A673 (cell line): ENCODE measurements at regions of chr3 and their contacts with region 1.

Region 1: DNA sequence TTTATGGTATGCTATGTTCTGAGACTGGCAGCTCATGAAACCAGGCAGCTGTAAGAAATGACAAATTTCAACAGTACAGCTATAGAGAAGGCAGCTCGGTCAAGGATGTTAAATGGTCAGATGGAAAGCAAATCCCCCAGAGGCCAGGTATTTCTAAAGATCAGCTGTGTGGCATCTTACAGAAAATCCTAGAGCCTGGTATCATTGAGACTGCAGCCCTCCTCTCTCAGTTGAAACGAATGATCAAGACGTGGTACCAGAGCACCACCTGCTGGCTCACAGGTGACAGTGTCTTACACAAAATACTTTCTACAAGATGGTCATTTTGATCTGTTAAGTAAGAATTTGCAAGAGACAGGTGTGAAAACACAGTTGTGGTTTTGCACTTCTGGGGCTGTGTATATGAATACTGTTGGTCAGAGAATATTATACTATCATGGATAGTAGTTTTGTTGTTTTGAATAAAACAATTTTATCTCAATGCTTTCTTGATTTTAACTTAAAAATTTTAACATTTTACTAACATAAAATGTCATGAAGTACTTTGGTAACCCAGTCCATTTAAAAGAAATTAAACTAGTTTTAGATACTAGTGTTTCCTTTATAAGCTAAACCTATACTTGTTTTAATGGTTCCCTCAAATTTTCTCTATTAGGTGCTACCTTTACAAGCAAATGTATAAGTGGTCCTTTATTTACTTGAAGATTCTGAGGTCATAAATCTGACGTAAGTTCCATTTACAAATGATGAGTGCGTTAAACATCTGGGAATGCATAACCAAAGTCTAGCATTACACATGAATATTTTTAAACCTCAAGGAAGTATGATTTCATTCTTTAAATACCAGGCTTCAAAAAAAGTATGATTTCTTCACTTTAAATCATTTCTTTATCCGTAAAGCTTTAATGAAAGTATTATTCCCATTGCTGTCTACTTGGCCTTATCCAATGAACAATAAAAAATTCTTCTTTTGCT is 121.8 kb downstream of the PDZRN3 start:
- DNase-seq: peak; percentile 49
- H3K4me3 ChIP-seq: no peak overlapping the region
- H3K27ac ChIP-seq: no peak overlapping the region
- H3K4me1 ChIP-seq: no peaks in the 10 kb centered on the region
- H3K27me3 ChIP-seq: no peaks in the 10 kb centered on the region
- CTCF ChIP-seq: peak; percentile 68

Region 2: GRCh38 chr3:73115806-73116205 is 387.1 kb before region 1 on chr3:
- CTCF ChIA-PET with region 1: interaction called, 16 read pairs
- POLR2A ChIA-PET with region 1: no interaction called
- intact Hi-C with region 1: no loop called
- DNase-seq: no peak
- H3K4me3 ChIP-seq: no peak overlapping the region
- H3K27ac ChIP-seq: no peak overlapping the region
- H3K4me1 ChIP-seq: no peaks in the 10 kb centered on the region
- H3K27me3 ChIP-seq: no peaks in the 10 kb centered on the region
- CTCF ChIP-seq: no peak

Region 3: GRCh38 chr3:73453666-73454065 is 49.2 kb before region 1 on chr3:
- CTCF ChIA-PET with region 1: no interaction called
- POLR2A ChIA-PET with region 1: no interaction called
- intact Hi-C with region 1: loop called (anchors 2 kb)
- DNase-seq: no peak
- H3K4me3 ChIP-seq: no peak overlapping the region
- H3K27ac ChIP-seq: no peak overlapping the region
- H3K4me1 ChIP-seq: no peaks in the 10 kb centered on the region
- H3K27me3 ChIP-seq: no peaks in the 10 kb centered on the region
- CTCF ChIP-seq: no peak